Endothelial cell of umbilical vein (primary cell): ENCODE measurements at regions of chr3 and their contacts with region 1.

Region 1: DNA sequence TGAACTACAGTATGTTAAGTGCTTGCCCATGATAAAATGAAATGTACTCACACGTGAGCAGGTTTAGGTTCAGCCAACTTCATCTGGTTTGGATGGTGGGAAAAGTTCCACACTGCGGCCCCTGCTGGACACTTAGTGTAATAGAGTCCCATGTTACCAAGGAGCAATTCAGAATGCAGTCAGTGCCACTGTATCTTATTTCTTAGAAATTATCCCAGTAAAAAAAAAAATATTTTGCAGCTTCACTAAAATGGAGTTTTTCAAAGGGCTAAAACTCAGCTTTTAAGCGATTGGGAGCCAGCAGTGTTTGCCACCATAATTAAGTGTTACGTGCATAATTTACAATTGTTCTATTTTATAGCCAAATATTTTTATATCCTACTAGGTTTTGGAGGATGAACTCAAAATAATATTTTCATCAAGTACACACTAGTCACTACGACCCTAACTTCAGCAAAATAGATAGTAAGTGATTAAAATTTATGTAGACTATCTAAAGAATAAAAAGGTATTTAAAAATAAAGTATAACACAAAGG is 371.7 kb upstream of the GBE1 start:
- DNase-seq: peak; percentile 71
- H3K4me3 ChIP-seq: no peak overlapping the region
- H3K27ac ChIP-seq: no peak overlapping the region
- H3K4me1 ChIP-seq: no peaks in the 10 kb centered on the region
- H3K27me3 ChIP-seq: no peaks in the 10 kb centered on the region
- CTCF ChIP-seq: peak; percentile 75 to 77
- POLR2A ChIP-seq: no peak

Region 2: DNA sequence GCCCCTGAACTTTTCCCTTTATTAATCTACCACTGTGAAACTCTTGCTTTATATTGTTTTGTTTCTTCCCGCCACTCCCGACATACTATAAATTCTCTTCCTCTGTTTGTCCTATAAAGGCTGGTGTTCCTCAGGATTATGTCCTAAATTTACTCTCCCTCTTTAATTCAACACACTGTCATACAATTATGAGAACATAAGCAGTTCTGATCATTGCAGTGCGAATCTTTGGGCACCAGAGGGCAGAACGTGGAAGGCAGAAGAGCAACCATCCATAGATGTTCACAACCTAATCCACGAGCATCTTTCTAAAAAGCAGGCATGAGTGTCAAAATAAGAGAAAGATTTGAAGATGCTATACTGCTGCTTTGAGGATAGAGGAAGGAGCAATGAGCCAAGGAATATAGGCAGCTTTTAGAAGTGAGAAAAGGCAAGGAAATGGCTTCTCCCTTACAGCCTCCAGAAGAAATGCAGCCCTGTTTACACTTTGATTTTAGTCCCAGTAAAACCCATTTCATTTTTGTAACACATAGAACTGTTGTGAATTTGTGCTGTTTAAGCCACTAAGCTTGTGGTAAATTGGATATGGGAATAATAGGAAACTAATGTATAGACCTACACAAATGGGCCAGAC is 551.1 kb before region 1 on chr3:
- CTCF ChIA-PET with region 1: no interaction called
- POLR2A ChIA-PET with region 1: no interaction called
- dilution Hi-C with region 1: no loop called
- intact Hi-C with region 1: loop called (anchors 1 kb)
- DNase-seq: peak; percentile 50
- H3K4me3 ChIP-seq: no peak overlapping the region
- H3K27ac ChIP-seq: no peak overlapping the region
- H3K4me1 ChIP-seq: no peaks in the 10 kb centered on the region
- H3K27me3 ChIP-seq: no peaks in the 10 kb centered on the region
- CTCF ChIP-seq: peak; percentile 62 to 66
- POLR2A ChIP-seq: no peak

Region 3: GRCh38 chr3:81666493-81667121 is 466.5 kb before region 1 on chr3:
- CTCF ChIA-PET with region 1: interaction called, 9 read pairs
- POLR2A ChIA-PET with region 1: no interaction called
- dilution Hi-C with region 1: no loop called
- intact Hi-C with region 1: loop called (anchors 1 kb)
- DNase-seq: peak; percentile 60
- H3K4me3 ChIP-seq: no peak overlapping the region
- H3K27ac ChIP-seq: no peak overlapping the region
- H3K4me1 ChIP-seq: no peaks in the 10 kb centered on the region
- H3K27me3 ChIP-seq: no peaks in the 10 kb centered on the region
- CTCF ChIP-seq: peak; percentile 43 to 52
- POLR2A ChIP-seq: no peak

Region 4: DNA sequence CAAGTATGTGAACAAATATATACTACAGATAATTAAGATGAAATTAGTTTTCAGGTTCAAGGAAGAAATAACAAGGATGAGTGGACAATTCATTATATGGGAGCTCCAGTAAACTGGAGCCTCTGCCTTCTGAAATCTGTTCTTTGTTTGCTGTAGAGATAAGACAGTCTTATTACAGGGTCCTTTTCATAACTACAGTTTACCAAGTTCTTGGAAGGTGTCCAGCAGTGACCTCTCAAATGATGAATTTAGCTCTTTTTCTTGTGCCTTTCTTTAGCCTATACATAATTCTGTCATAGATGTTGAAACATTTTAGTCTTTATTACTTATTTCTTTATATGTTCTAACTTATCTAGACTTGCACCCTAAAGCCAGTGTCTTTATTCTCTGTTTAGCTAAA is 282.0 kb before region 1 on chr3:
- CTCF ChIA-PET with region 1: no interaction called
- POLR2A ChIA-PET with region 1: no interaction called
- dilution Hi-C with region 1: no loop called
- intact Hi-C with region 1: no loop called
- DNase-seq: no peak
- H3K4me3 ChIP-seq: no peak overlapping the region
- H3K27ac ChIP-seq: no peak overlapping the region
- H3K4me1 ChIP-seq: no peaks in the 10 kb centered on the region
- H3K27me3 ChIP-seq: no peaks in the 10 kb centered on the region
- CTCF ChIP-seq: no peak
- POLR2A ChIP-seq: no peak

Region 5: DNA sequence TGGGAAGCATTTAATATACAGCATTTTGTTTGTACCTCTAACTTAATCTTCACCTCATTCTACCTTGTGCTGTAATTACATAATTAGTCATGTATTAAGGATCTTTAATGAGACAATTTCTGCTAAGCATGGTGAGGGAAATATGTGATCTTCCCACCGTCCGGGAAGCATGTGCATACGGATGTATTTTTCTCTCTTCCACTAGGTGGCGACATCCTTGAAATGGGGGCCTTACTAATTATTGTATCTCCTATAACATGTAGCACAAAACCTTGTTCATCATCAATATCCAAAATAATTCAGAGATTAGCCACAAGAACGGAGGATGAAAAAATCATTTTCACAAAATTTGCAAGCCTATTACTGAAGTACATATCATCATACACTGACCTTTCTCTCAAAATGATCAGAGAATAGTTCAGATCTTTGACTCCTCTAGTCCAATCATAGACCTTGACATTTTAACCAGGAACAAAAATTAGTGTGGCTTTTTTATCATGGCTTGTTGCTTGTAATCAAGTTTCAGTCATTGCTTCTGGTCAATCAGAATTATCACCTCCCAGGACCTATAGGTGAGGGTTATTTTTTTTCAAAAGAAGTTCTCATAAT is 222.8 kb before region 1 on chr3:
- CTCF ChIA-PET with region 1: interaction called, 49 read pairs
- POLR2A ChIA-PET with region 1: no interaction called
- dilution Hi-C with region 1: no loop called
- intact Hi-C with region 1: loop called (anchors 1 kb)
- DNase-seq: peak; percentile 45
- H3K4me3 ChIP-seq: no peak overlapping the region
- H3K27ac ChIP-seq: no peak overlapping the region
- H3K4me1 ChIP-seq: no peaks in the 10 kb centered on the region
- H3K27me3 ChIP-seq: peaks cover 0 to 2% of the 10 kb centered on the region in 2 experiments
- CTCF ChIP-seq: peak; percentile 55 to 64
- POLR2A ChIP-seq: no peak

Region 6: GRCh38 chr3:82012775-82013174 is 120.4 kb before region 1 on chr3:
- CTCF ChIA-PET with region 1: interaction called, 7 read pairs
- POLR2A ChIA-PET with region 1: no interaction called
- dilution Hi-C with region 1: no loop called
- intact Hi-C with region 1: loop called (anchors 1 kb)
- DNase-seq: peak; percentile 11
- H3K4me3 ChIP-seq: no peak overlapping the region
- H3K27ac ChIP-seq: no peak overlapping the region
- H3K4me1 ChIP-seq: no peaks in the 10 kb centered on the region
- H3K27me3 ChIP-seq: no peaks in the 10 kb centered on the region
- CTCF ChIP-seq: peak; percentile 21 to 24
- POLR2A ChIP-seq: no peak

Region 7: DNA sequence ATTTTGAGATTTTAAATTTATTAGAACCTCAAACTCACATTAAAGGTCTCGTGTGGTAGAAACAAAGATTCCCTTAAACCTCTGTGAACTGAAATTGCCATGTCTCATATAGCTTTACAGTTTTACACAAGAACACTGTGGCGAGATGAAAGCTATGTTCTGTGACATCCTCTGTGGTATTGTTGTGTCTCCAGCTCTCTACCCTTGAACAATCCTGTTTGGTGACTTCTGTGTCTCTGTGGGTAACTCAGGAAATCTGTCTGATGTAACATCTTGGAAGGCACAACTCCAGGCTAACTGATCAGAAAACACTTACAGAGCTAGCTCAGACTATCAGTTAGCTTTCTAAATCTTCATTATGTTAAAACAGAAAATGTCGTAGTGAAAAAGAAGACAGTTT is 52.9 kb before region 1 on chr3:
- CTCF ChIA-PET with region 1: interaction called, 9 read pairs
- POLR2A ChIA-PET with region 1: no interaction called
- dilution Hi-C with region 1: no loop called
- intact Hi-C with region 1: loop called (anchors 2 kb)
- DNase-seq: peak; percentile 61
- H3K4me3 ChIP-seq: no peak overlapping the region
- H3K27ac ChIP-seq: peak overlapping the region; percentile 79
- H3K4me1 ChIP-seq: peaks cover 33% of the 10 kb centered on the region
- H3K27me3 ChIP-seq: no peaks in the 10 kb centered on the region
- CTCF ChIP-seq: no peak
- POLR2A ChIP-seq: no peak

Region 8: GRCh38 chr3:82087958-82088357 is 45.2 kb before region 1 on chr3:
- CTCF ChIA-PET with region 1: interaction called, 6 read pairs
- POLR2A ChIA-PET with region 1: no interaction called
- dilution Hi-C with region 1: no loop called
- intact Hi-C with region 1: loop called (anchors 2 kb)
- DNase-seq: peak; percentile 82
- H3K4me3 ChIP-seq: no peak overlapping the region
- H3K27ac ChIP-seq: peak overlapping the region; percentile 70
- H3K4me1 ChIP-seq: peaks cover 45% of the 10 kb centered on the region
- H3K27me3 ChIP-seq: no peaks in the 10 kb centered on the region
- CTCF ChIP-seq: no peak
- POLR2A ChIP-seq: no peak